ENCODE measurements at regions of chr20 and their contacts with region 1.

Region 1: GRCh38 chr20:48620519-48621254 is 207.1 kb downstream of the PREX1 start:
- DNase-seq: peak; percentile 50 to 74 (median 63)
- H3K4me3 ChIP-seq: no peak overlapping the region
- H3K4me3 Mint-ChIP-seq: peak overlapping the region; percentile 1 to 69 (median 60)
- H3K27ac ChIP-seq: no peak overlapping the region
- H3K27ac Mint-ChIP-seq: peak overlapping the region in 5 of 8 donors; percentile 43 to 78 (median 49)
- H3K4me1 ChIP-seq: peaks cover 10% of the 10 kb centered on the region
- H3K4me1 Mint-ChIP-seq: peaks cover 14 to 18% (median 18%) of the 10 kb centered on the region in 3 donors
- H3K27me3 ChIP-seq: no peaks in the 10 kb centered on the region
- H3K27me3 Mint-ChIP-seq: peaks cover 0 to 2% of the 10 kb centered on the region in 2 donors

Region 2: GRCh38 chr20:47663333-47664067 is 957.2 kb before region 1 on chr20:
- CTCF ChIA-PET with region 1: interaction called, 16 read pairs
- POLR2A ChIA-PET with region 1: no interaction called
- DNase-seq: peak; percentile 56 to 79 (median 59)
- H3K4me3 ChIP-seq: no peak overlapping the region
- H3K4me3 Mint-ChIP-seq: no peak overlapping the region
- H3K27ac ChIP-seq: no peak overlapping the region
- H3K27ac Mint-ChIP-seq: peak overlapping the region in 4 of 8 donors; percentile 3 to 70 (median 18)
- H3K4me1 ChIP-seq: peaks cover 7% of the 10 kb centered on the region
- H3K4me1 Mint-ChIP-seq: peaks cover 3 to 7% (median 6%) of the 10 kb centered on the region in 3 donors
- H3K27me3 ChIP-seq: no peaks in the 10 kb centered on the region
- H3K27me3 Mint-ChIP-seq: no peaks in the 10 kb centered on the region

Region 3: DNA sequence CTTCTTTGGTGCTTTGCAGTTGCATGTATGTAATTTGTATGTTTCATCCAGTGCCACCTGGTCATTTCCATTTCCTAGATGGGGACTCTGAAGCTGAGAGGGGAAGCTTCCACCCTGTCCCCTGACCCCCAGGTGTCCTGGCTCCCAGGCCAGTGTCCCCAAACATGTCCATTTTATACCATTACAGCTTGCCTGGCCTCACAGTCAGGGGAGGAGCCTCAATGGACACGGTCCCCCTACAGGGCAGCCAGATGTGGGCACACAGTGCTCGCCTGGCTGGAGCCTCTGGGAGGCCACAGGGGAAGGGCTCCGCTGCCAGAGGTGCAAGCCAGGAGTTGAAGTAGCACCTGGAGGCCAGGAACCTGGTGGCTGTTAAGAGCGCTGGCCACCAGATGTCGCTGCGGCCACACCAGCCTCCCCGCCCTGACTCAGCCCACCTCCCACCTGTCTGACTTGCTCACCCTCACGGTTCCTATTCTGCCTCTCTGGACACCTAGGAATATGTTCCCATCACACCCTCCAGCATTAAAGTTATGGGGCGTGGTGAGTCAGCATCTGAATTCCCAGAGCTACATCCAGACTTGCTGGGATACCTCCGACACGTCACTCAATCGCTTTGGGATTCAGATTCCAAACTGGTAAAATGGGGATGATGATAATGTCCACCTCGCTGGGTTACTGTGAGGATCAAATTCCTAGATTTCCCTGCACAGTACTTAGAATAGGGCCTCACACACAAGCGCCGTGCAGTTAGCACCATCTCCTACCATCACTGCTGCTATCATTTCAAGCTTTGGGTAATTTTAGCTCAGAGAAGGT is 942.8 kb before region 1 on chr20:
- CTCF ChIA-PET with region 1: interaction called, 30 read pairs
- POLR2A ChIA-PET with region 1: no interaction called
- DNase-seq: peak in 4 of 5 donors; percentile 17 to 52 (median 28)
- H3K4me3 ChIP-seq: no peak overlapping the region
- H3K4me3 Mint-ChIP-seq: no peak overlapping the region
- H3K27ac ChIP-seq: no peak overlapping the region
- H3K27ac Mint-ChIP-seq: no peak overlapping the region
- H3K4me1 ChIP-seq: no peaks in the 10 kb centered on the region
- H3K4me1 Mint-ChIP-seq: peaks cover 3 to 5% (median 4%) of the 10 kb centered on the region in 3 donors
- H3K27me3 ChIP-seq: no peaks in the 10 kb centered on the region
- H3K27me3 Mint-ChIP-seq: peaks cover 0 to 2% of the 10 kb centered on the region in 2 donors

Region 4: GRCh38 chr20:47725248-47725973 is 895.3 kb before region 1 on chr20:
- CTCF ChIA-PET with region 1: interaction called, 28 read pairs
- POLR2A ChIA-PET with region 1: no interaction called
- DNase-seq: peak; percentile 31 to 89 (median 71)
- H3K4me3 ChIP-seq: no peak overlapping the region
- H3K4me3 Mint-ChIP-seq: peak overlapping the region in 1 of 7 donors; percentile 32
- H3K27ac ChIP-seq: no peak overlapping the region
- H3K27ac Mint-ChIP-seq: peak overlapping the region in 6 of 8 donors; percentile 42 to 95 (median 66)
- H3K4me1 ChIP-seq: peaks cover 38% of the 10 kb centered on the region
- H3K4me1 Mint-ChIP-seq: peaks cover 24 to 45% (median 35%) of the 10 kb centered on the region in 3 donors
- H3K27me3 ChIP-seq: no peaks in the 10 kb centered on the region
- H3K27me3 Mint-ChIP-seq: peaks cover 0 to 1% of the 10 kb centered on the region in 2 donors

Region 5: DNA sequence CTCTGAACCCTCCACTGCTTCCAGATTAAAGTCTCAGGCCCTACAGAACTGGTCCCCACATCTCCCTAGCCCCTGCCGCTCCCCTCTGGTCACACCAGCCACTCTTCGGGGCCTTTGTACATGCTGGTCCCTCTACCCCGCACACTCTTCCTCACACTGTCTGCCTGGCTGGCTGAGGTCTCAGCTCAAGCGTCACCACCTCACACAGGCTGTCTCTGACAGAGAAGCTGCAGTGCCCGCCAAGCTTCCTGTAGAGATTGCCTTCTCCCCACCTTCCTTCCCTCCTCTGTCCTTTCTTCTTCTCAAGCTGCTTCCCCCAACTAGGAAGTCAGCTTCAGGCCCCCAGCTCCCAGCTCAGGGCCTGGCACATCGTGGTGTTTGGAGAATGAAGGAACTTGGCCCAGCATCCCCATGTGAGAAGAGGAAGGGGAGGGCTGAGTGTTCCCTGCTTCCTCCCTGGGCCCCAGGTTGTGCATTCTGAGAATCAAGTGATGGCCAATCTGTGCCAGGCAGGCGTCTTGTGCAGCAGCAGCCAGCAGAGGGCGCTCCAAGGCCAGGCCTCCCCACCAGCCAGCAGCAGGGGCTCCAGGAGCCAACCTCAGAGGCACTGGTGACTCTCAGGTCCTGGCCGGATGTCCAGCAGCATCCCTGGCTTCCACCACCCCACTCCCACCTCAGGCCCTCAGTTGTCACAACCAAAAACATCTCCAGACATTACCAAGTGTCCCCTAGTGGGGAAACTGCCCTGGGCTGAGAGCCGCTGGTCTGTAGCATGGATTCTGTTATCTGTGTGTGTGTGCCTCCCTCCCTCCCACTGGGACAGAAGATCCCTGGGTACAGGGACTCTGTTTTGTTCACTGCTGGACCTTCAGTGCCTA is 15.0 kb after region 1 on chr20:
- CTCF ChIA-PET with region 1: interaction called, 10 read pairs
- POLR2A ChIA-PET with region 1: interaction called, 4 read pairs
- DNase-seq: peak; percentile 42 to 64 (median 54)
- H3K4me3 ChIP-seq: no peak overlapping the region
- H3K4me3 Mint-ChIP-seq: no peak overlapping the region
- H3K27ac ChIP-seq: no peak overlapping the region
- H3K27ac Mint-ChIP-seq: peak overlapping the region in 7 of 8 donors; percentile 11 to 87 (median 79)
- H3K4me1 ChIP-seq: no peaks in the 10 kb centered on the region
- H3K4me1 Mint-ChIP-seq: peaks cover 3 to 16% (median 4%) of the 10 kb centered on the region in 3 donors
- H3K27me3 ChIP-seq: no peaks in the 10 kb centered on the region
- H3K27me3 Mint-ChIP-seq: peaks cover 0 to 16% of the 10 kb centered on the region in 2 donors